CD4-positive, alpha-beta memory T cell (primary cell): ENCODE measurements at regions of chr1 and their contacts with region 1.

Region 1: GRCh38 chr1:172443626-172444453 is at the start of gene PIGC:
- DNase-seq: peak; percentile 86 to 89 (median 87)
- H3K4me3 ChIP-seq: peak within 1 kb of the TSS; percentile 44 to 83
- H3K4me3 Mint-ChIP-seq: peak within 1 kb of the TSS; percentile 92 to 98 (median 96)
- H3K27ac ChIP-seq: peak within 1 kb of the TSS; percentile 67
- H3K27ac Mint-ChIP-seq: peak within 1 kb of the TSS; percentile 89 to 97 (median 95)
- H3K4me1 ChIP-seq: peaks cover 36% of the 10 kb centered on the region
- H3K4me1 Mint-ChIP-seq: peaks cover 32 to 49% (median 41%) of the 10 kb centered on the region in 4 donors
- H3K27me3 ChIP-seq: no peaks in the 10 kb centered on the region
- H3K27me3 Mint-ChIP-seq: no peaks in the 10 kb centered on the region
- total RNA-seq, gene PIGC: 48.9 to 49.2 TPM

Region 2: DNA sequence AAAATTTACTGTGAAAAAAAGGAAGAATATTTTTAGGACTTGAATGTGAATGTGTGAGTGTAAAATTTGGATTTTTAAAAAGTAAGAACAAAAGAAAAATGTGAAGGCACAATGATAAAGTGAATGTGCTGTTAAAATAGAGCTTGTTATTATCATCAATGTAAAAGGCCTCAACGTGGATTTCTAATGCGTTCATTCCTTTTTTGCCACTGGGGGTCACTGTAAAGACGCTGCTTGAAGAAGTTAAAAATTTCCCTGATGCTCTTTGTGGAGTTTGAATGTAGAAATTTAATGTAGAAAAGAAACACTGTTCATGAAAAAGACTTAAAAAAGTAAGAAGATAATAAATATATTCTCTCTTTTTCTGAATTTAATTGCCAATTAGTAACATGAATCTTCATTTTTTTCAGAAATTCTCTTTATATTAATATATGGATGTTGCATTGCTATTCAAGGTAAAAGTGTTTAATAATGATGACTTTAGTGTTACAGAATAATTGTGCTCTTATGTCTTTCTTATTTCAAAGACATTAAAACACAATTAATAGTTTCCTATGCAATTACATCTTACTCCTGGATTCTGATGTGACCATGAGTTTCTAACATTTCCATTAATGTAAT is 441.0 kb before region 1 on chr1:
- CTCF ChIA-PET with region 1: interaction called, 34 read pairs
- POLR2A ChIA-PET with region 1: no interaction called
- intact Hi-C with region 1: loop called (anchors 1 kb)
- DNase-seq: peak; percentile 30 to 46 (median 32)
- H3K4me3 ChIP-seq: no peak overlapping the region
- H3K4me3 Mint-ChIP-seq: no peak overlapping the region
- H3K27ac ChIP-seq: no peak overlapping the region
- H3K27ac Mint-ChIP-seq: no peak overlapping the region
- H3K4me1 ChIP-seq: no peaks in the 10 kb centered on the region
- H3K4me1 Mint-ChIP-seq: peaks cover 6 to 16% (median 8%) of the 10 kb centered on the region in 4 donors
- H3K27me3 ChIP-seq: no peaks in the 10 kb centered on the region
- H3K27me3 Mint-ChIP-seq: no peaks in the 10 kb centered on the region

Region 3: GRCh38 chr1:172089768-172090510 is 353.9 kb before region 1 on chr1:
- CTCF ChIA-PET with region 1: interaction called, 5 read pairs
- POLR2A ChIA-PET with region 1: no interaction called
- intact Hi-C with region 1: loop called (anchors 1 kb)
- DNase-seq: peak; percentile 42 to 57 (median 49)
- H3K4me3 ChIP-seq: no peak overlapping the region
- H3K4me3 Mint-ChIP-seq: peak overlapping the region in 1 of 8 donors; percentile 18
- H3K27ac ChIP-seq: no peak overlapping the region
- H3K27ac Mint-ChIP-seq: peak overlapping the region in 1 of 7 donors; percentile 73
- H3K4me1 ChIP-seq: no peaks in the 10 kb centered on the region
- H3K4me1 Mint-ChIP-seq: peaks cover 3 to 6% (median 4%) of the 10 kb centered on the region in 4 donors
- H3K27me3 ChIP-seq: no peaks in the 10 kb centered on the region
- H3K27me3 Mint-ChIP-seq: peaks cover 0 to 2% of the 10 kb centered on the region in 2 donors

Region 4: DNA sequence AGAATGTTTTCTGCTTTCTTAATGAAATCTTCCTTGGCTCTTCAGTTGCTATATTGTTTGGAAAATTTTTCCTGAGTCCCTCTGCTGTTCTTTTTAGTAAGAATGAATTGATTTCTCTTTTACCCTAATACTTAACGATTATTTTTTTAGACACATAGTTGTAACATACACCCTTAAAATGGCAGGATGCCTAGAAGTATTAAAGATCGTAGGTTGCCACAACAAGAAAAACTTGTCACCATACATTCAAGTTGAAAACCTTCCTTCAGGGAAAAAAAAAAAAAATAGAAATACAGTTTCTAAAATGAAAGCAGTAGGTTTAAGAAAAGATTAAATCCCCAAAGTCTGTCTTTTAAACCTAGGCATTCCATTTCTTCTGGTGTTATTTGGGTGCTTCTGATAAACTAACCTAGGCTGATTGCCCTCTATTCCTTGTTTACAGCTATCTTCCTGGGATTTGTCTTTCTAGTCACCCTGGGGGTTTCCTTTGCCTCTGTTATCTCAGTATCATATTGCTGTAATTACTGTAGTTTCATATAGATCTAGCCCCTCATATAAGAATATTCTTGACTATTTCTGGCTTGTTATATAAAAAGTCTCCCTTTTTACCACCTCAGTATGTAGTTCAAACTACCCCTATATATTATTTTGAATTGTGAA is 105.9 kb after region 1 on chr1:
- CTCF ChIA-PET with region 1: no interaction called
- POLR2A ChIA-PET with region 1: no interaction called
- intact Hi-C with region 1: no loop called
- DNase-seq: no peak
- H3K4me3 ChIP-seq: no peak overlapping the region
- H3K4me3 Mint-ChIP-seq: peak overlapping the region in 2 of 8 donors; percentile 40 to 54
- H3K27ac ChIP-seq: no peak overlapping the region
- H3K27ac Mint-ChIP-seq: peak overlapping the region in 2 of 7 donors; percentile 65 to 67
- H3K4me1 ChIP-seq: peaks cover 57% of the 10 kb centered on the region
- H3K4me1 Mint-ChIP-seq: peaks cover 26 to 52% (median 35%) of the 10 kb centered on the region in 4 donors
- H3K27me3 ChIP-seq: no peaks in the 10 kb centered on the region
- H3K27me3 Mint-ChIP-seq: no peaks in the 10 kb centered on the region